ENCODE measurements at regions of chr9 and their contacts with region 1.

Region 1: GRCh38 chr9:97559111-97559514 is 57.6 kb downstream of the TMOD1 start:
- DNase-seq: peak; percentile 85
- ATAC-seq: peak; percentile 90
- H3K4me3 ChIP-seq: peak overlapping the region; percentile 48; the same call in 1 of the 2 replicates
- H3K27ac ChIP-seq: peak overlapping the region; percentile 91
- H3K4me1 ChIP-seq: peaks cover 35% of the 10 kb centered on the region
- H3K27me3 ChIP-seq: no peaks in the 10 kb centered on the region
- CTCF ChIP-seq: no peak
- EP300 ChIP-seq: peak in 1 of 2 experiments; percentile 37; a peak in 1 of 4 replicates
- POLR2A ChIP-seq: 0 out of 2 replicates have a peak, but pooled peaks have one; percentile 38
- RAD21 ChIP-seq: no peak

Region 2: GRCh38 chr9:97529363-97530076 is 29.6 kb before region 1 on chr9:
- CTCF ChIA-PET with region 1: no interaction called
- POLR2A ChIA-PET with region 1: interaction called, 4 read pairs
- RAD21 ChIA-PET with region 1: interaction called, 11 read pairs
- SMC1A ChIA-PET with region 1: interaction called, 17 read pairs
- in situ Hi-C with region 1: no loop called
- intact Hi-C with region 1: loop called (anchors 2 kb)
- DNase-seq: peak; percentile 78
- ATAC-seq: peak; percentile 94
- H3K4me3 ChIP-seq: no peak overlapping the region; the same call in 1 of the 2 replicates
- H3K27ac ChIP-seq: peak overlapping the region; percentile 64
- H3K4me1 ChIP-seq: peaks cover 29% of the 10 kb centered on the region
- H3K27me3 ChIP-seq: no peaks in the 10 kb centered on the region
- CTCF ChIP-seq: no peak
- EP300 ChIP-seq: no peak; a peak in 1 of 4 replicates
- POLR2A ChIP-seq: 0 out of 2 replicates have a peak, but pooled peaks have one; percentile 27
- RAD21 ChIP-seq: no peak

Region 3: DNA sequence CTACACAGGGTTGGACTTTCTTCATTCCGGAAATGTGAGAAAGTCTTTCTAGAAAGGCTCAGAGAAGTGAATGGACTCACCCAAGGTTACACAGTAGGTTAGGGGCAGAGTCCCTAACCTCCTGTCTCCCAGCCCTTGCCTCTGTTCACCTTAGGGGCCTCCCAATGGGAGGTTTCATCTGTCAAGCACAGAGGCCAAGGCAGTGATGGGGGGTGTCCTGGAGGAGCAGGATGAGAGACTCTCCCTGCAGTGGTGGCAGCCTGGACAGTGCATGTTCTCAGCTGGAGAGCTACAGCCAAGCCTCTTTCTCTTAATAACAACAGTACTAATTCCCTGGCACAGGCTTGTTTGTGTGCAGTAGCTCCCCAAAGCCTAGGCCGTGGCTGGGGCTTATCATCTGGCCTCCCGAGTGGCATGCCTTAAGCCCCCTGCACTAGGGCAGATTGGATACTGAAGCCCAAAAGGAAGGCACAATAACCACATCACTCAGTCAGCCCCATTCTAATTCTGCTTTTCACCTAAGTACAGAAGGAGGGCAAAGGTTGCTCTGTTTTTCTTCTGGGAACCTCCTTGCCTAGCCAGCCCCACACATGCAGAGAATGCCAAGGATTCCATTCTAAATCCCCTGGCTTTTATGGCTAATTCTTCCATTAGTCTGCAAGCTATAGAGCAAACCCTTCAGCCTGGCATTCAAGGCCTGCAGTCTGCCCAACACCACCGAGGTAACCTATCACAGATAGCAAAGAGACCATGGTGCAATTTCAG is 188.3 kb after region 1 on chr9:
- CTCF ChIA-PET with region 1: no interaction called
- POLR2A ChIA-PET with region 1: no interaction called
- RAD21 ChIA-PET with region 1: no interaction called
- SMC1A ChIA-PET with region 1: no interaction called
- in situ Hi-C with region 1: no loop called
- intact Hi-C with region 1: no loop called
- DNase-seq: no peak
- ATAC-seq: no peak
- H3K4me3 ChIP-seq: no peak overlapping the region
- H3K27ac ChIP-seq: no peak overlapping the region
- H3K4me1 ChIP-seq: no peaks in the 10 kb centered on the region
- H3K27me3 ChIP-seq: peaks cover 0 to 2% of the 10 kb centered on the region in 2 experiments; a peak in 1 of 4 replicates
- CTCF ChIP-seq: no peak
- EP300 ChIP-seq: no peak
- POLR2A ChIP-seq: no peak
- RAD21 ChIP-seq: no peak

Measured in GM12878 (cell line).